Caco-2 (cell line): ENCODE measurements at regions of chr1 and their contacts with region 1.

Region 1: GRCh38 chr1:54429179-54429520 is 23.0 kb upstream of the SSBP3 start:
- DNase-seq: peak; percentile 42 to 51
- H3K4me3 ChIP-seq: no peak overlapping the region
- H3K4me3 Mint-ChIP-seq: no peak overlapping the region
- H3K27ac Mint-ChIP-seq: peak overlapping the region; percentile 81
- H3K4me1 ChIP-seq: no peaks in the 10 kb centered on the region
- H3K4me1 Mint-ChIP-seq: peaks cover 6% of the 10 kb centered on the region
- H3K27me3 ChIP-seq: no peaks in the 10 kb centered on the region
- H3K27me3 Mint-ChIP-seq: no peaks in the 10 kb centered on the region
- CTCF ChIP-seq: no peak

Region 2: GRCh38 chr1:53945433-53946251 is 483.5 kb before region 1 on chr1 and contains the start of gene IFT25:
- CTCF ChIA-PET with region 1: no interaction called
- POLR2A ChIA-PET with region 1: no interaction called
- intact Hi-C with region 1: no loop called
- DNase-seq: peak; percentile 93 to 95
- H3K4me3 ChIP-seq: peak within 1 kb of the TSS; percentile 91
- H3K4me3 Mint-ChIP-seq: peak within 1 kb of the TSS; percentile 94
- H3K27ac Mint-ChIP-seq: peak within 1 kb of the TSS; percentile 89
- H3K4me1 ChIP-seq: peaks cover 27% of the 10 kb centered on the region
- H3K4me1 Mint-ChIP-seq: peaks cover 30% of the 10 kb centered on the region
- H3K27me3 ChIP-seq: no peaks in the 10 kb centered on the region
- H3K27me3 Mint-ChIP-seq: no peaks in the 10 kb centered on the region
- CTCF ChIP-seq: no peak
- total RNA-seq, gene IFT25: 31.7 and 35.1 TPM in 2 replicates

Region 3: GRCh38 chr1:54406339-54407153 is 22.6 kb before region 1 on chr1 and contains the start of gene SSBP3:
- CTCF ChIA-PET with region 1: no interaction called
- POLR2A ChIA-PET with region 1: no interaction called
- intact Hi-C with region 1: loop called (anchors 2 kb)
- DNase-seq: peak; percentile 87 to 95
- H3K4me3 ChIP-seq: peak within 1 kb of the TSS; percentile 59
- H3K4me3 Mint-ChIP-seq: peak within 1 kb of the TSS; percentile 79
- H3K27ac Mint-ChIP-seq: peak within 1 kb of the TSS; percentile 11
- H3K4me1 ChIP-seq: peaks cover 28% of the 10 kb centered on the region
- H3K4me1 Mint-ChIP-seq: peaks cover 38% of the 10 kb centered on the region
- H3K27me3 ChIP-seq: no peaks in the 10 kb centered on the region
- H3K27me3 Mint-ChIP-seq: no peaks in the 10 kb centered on the region
- CTCF ChIP-seq: no peak
- total RNA-seq, gene SSBP3: 40.6 and 42.1 TPM in 2 replicates

Region 4: GRCh38 chr1:54459726-54460191 is 30.6 kb after region 1 on chr1:
- CTCF ChIA-PET with region 1: no interaction called
- POLR2A ChIA-PET with region 1: no interaction called
- intact Hi-C with region 1: no loop called
- DNase-seq: no peak
- H3K4me3 ChIP-seq: no peak overlapping the region
- H3K4me3 Mint-ChIP-seq: no peak overlapping the region
- H3K27ac Mint-ChIP-seq: no peak overlapping the region
- H3K4me1 ChIP-seq: no peaks in the 10 kb centered on the region
- H3K4me1 Mint-ChIP-seq: no peaks in the 10 kb centered on the region
- H3K27me3 ChIP-seq: no peaks in the 10 kb centered on the region
- H3K27me3 Mint-ChIP-seq: no peaks in the 10 kb centered on the region
- CTCF ChIP-seq: no peak

Region 5: DNA sequence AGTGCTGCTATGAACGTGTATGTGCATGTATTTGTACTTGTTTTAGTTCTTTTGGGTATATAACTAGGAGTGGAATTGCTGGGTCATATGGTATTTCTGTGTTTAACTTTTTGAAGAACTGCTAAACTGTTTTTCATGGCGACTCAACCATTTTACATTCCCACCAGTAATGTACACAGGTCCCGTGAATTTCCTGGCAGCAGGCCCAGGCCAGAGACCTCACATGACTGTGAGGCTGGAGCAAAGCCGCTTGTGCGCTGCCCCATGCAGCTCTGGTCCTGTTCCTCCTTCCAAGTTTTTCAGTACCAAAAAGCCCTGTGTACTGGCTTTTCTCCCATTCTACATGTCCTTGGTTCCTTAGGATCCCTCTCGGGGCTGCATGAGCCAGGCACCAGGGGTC is 148.5 kb after region 1 on chr1:
- CTCF ChIA-PET with region 1: no interaction called
- POLR2A ChIA-PET with region 1: no interaction called
- intact Hi-C with region 1: no loop called
- DNase-seq: no peak
- H3K4me3 ChIP-seq: no peak overlapping the region
- H3K4me3 Mint-ChIP-seq: no peak overlapping the region
- H3K27ac Mint-ChIP-seq: no peak overlapping the region
- H3K4me1 ChIP-seq: no peaks in the 10 kb centered on the region
- H3K4me1 Mint-ChIP-seq: peaks cover 6% of the 10 kb centered on the region
- H3K27me3 ChIP-seq: no peaks in the 10 kb centered on the region
- H3K27me3 Mint-ChIP-seq: no peaks in the 10 kb centered on the region
- CTCF ChIP-seq: no peak

Region 6: GRCh38 chr1:54663725-54664124 is 234.6 kb after region 1 on chr1:
- CTCF ChIA-PET with region 1: no interaction called
- POLR2A ChIA-PET with region 1: no interaction called
- intact Hi-C with region 1: no loop called
- DNase-seq: no peak
- H3K4me3 ChIP-seq: no peak overlapping the region
- H3K4me3 Mint-ChIP-seq: no peak overlapping the region
- H3K27ac Mint-ChIP-seq: no peak overlapping the region
- H3K4me1 ChIP-seq: no peaks in the 10 kb centered on the region
- H3K4me1 Mint-ChIP-seq: no peaks in the 10 kb centered on the region
- H3K27me3 ChIP-seq: no peaks in the 10 kb centered on the region
- H3K27me3 Mint-ChIP-seq: no peaks in the 10 kb centered on the region
- CTCF ChIP-seq: no peak